Tibial artery (tissue), 4 donors: ENCODE measurements at regions of chr4 and their contacts with region 1.

Region 1: DNA sequence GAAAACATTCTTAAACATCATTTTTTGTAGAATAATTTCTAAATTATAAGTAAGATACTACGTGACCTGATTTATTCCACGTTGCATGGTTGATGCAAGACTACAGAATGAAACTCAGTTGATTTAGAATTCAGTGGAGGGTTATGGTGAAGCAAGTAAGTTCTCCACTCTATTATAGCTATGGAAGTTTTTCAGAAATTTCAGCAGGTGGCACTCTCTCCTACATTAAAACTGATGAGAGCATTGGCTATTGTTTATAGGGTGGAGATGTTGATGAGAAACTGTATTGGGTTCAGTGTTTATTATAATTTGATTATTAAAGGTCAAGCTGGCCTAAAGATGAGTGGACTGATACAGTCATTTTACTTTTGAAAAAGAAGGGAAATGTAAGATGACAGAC is 88.0 kb downstream of the FNIP2 start:
- DNase-seq: no peak
- H3K4me3 ChIP-seq: no peak overlapping the region
- H3K27ac ChIP-seq: no peak overlapping the region
- H3K4me1 ChIP-seq: no peaks in the 10 kb centered on the region
- H3K27me3 ChIP-seq: no peaks in the 10 kb centered on the region
- CTCF ChIP-seq: peak; percentile 52 to 69

Region 2: GRCh38 chr4:158729716-158730559 is 126.9 kb before region 1 on chr4:
- intact Hi-C with region 1: loop called (anchors 2 kb)
- DNase-seq: peak; percentile 58 to 73
- H3K4me3 ChIP-seq: no peak overlapping the region
- H3K27ac ChIP-seq: no peak overlapping the region
- H3K4me1 ChIP-seq: peaks cover 0 to 6% (median 0%) of the 10 kb centered on the region in 4 donors
- H3K27me3 ChIP-seq: no peaks in the 10 kb centered on the region
- CTCF ChIP-seq: peak; percentile 96

Region 3: GRCh38 chr4:158760866-158761265 is 96.0 kb before region 1 on chr4:
- intact Hi-C with region 1: no loop called
- DNase-seq: no peak
- H3K4me3 ChIP-seq: no peak overlapping the region
- H3K27ac ChIP-seq: no peak overlapping the region
- H3K4me1 ChIP-seq: no peaks in the 10 kb centered on the region
- H3K27me3 ChIP-seq: no peaks in the 10 kb centered on the region
- CTCF ChIP-seq: no peak

Region 4: GRCh38 chr4:159175085-159175988 is 318.5 kb after region 1 on chr4:
- intact Hi-C with region 1: loop called (anchors 5 kb)
- DNase-seq: peak; percentile 68 to 70
- H3K4me3 ChIP-seq: no peak overlapping the region
- H3K27ac ChIP-seq: peak overlapping the region in 1 of 2 donors; percentile 7
- H3K4me1 ChIP-seq: peaks cover 0 to 85% (median 35%) of the 10 kb centered on the region in 4 donors
- H3K27me3 ChIP-seq: no peaks in the 10 kb centered on the region
- CTCF ChIP-seq: peak; percentile 79 to 80

Region 5: DNA sequence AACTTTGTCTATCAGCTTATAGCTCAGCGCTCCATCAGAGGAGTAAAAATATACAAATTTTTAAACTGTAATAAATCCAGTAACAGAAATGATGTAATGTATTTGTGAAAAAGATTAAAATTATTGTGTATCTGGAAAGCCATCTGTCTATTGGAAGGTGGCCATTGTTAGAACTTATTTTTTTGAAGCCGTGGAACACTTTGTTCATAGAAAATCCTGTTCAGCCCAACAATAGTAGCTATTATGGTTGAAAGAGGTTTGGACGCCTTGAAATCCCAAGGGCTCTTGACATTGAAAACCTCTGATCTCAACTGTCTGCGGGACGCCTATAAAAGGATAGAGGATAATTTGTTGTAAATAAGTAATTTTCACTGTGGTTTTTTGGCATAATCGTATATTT is 344.3 kb after region 1 on chr4:
- intact Hi-C with region 1: loop called (anchors 2 kb)
- DNase-seq: no peak
- H3K4me3 ChIP-seq: no peak overlapping the region
- H3K27ac ChIP-seq: peak overlapping the region in 1 of 2 donors; percentile 19
- H3K4me1 ChIP-seq: peaks cover 0 to 33% (median 9%) of the 10 kb centered on the region in 4 donors
- H3K27me3 ChIP-seq: no peaks in the 10 kb centered on the region
- CTCF ChIP-seq: no peak

Region 6: DNA sequence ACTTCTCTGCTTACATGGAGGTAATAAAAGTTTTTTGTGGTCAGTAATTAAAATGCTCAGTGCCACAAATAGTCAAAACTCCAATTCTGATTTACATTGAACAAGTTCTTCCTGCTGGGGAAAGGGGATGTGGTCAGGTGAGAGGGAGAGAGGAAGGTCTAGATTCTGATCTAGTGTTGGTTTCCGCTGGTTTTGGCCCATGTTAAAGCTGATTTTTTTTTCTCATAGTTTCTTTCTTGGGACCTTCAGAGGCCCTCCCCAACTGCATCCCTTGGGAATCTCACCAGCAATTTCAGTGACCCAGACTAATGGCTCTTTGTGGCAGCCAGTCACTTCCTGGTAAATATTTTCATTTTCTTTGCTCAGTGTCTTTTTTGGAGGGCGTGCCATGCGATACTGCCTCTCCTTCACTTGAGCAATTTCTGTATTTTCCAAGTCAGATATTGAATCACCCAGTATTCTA is 578.7 kb after region 1 on chr4:
- intact Hi-C with region 1: loop called (anchors 5 kb)
- DNase-seq: no peak
- H3K4me3 ChIP-seq: no peak overlapping the region
- H3K27ac ChIP-seq: peak overlapping the region; percentile 54 to 63
- H3K4me1 ChIP-seq: peaks cover 0 to 38% (median 21%) of the 10 kb centered on the region in 4 donors
- H3K27me3 ChIP-seq: no peaks in the 10 kb centered on the region
- CTCF ChIP-seq: no peak

Region 7: DNA sequence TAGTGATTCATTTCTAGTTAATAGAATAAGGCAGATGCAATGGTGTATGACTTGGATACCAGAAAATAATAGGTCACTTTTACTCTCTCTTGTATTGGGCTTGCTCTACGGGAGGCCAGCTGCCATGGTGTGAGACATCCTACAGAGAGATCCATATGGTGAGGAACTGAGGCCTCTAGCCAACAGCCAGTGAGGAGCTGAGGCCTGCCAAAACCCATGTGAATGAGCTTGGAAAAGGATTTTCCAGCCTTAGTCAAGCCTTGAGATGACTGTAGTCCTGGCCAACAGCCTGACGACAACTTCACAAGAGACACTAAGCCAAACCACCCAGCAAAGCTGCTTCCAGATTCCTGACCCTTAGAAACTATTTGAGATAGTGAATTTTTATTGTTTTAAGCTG is 1546.2 kb after region 1 on chr4:
- intact Hi-C with region 1: no loop called
- DNase-seq: no peak
- H3K4me3 ChIP-seq: no peak overlapping the region
- H3K27ac ChIP-seq: no peak overlapping the region
- H3K4me1 ChIP-seq: no peaks in the 10 kb centered on the region
- H3K27me3 ChIP-seq: no peaks in the 10 kb centered on the region
- CTCF ChIP-seq: no peak